HepG2 (cell line): ENCODE measurements at regions of chr4 and their contacts with region 1.

Region 1: GRCh38 chr4:23401572-23401971 is 488.3 kb downstream of the PPARGC1A start:
- DNase-seq: no peak
- ATAC-seq: no peak
- H3K4me3 ChIP-seq: no peak overlapping the region
- H3K27ac ChIP-seq: no peak overlapping the region
- H3K4me1 ChIP-seq: no peaks in the 10 kb centered on the region
- H3K27me3 ChIP-seq: no peaks in the 10 kb centered on the region
- CTCF ChIP-seq: no peak
- EP300 ChIP-seq: no peak
- POLR2A ChIP-seq: no peak
- RAD21 ChIP-seq: no peak

Region 2: GRCh38 chr4:22670956-22671355 is 730.6 kb before region 1 on chr4:
- CTCF ChIA-PET with region 1: no interaction called
- POLR2A ChIA-PET with region 1: no interaction called
- in situ Hi-C with region 1: no loop called
- intact Hi-C with region 1: loop called (anchors 5 kb)
- DNase-seq: no peak
- ATAC-seq: no peak
- H3K4me3 ChIP-seq: no peak overlapping the region
- H3K27ac ChIP-seq: no peak overlapping the region
- H3K4me1 ChIP-seq: no peaks in the 10 kb centered on the region
- H3K27me3 ChIP-seq: no peaks in the 10 kb centered on the region
- CTCF ChIP-seq: no peak
- EP300 ChIP-seq: no peak
- POLR2A ChIP-seq: no peak
- RAD21 ChIP-seq: no peak

Region 3: GRCh38 chr4:24131954-24132673 is 730.5 kb after region 1 on chr4:
- CTCF ChIA-PET with region 1: no interaction called
- POLR2A ChIA-PET with region 1: no interaction called
- in situ Hi-C with region 1: no loop called
- intact Hi-C with region 1: no loop called
- DNase-seq: no peak
- ATAC-seq: no peak
- H3K4me3 ChIP-seq: no peak overlapping the region
- H3K27ac ChIP-seq: no peak overlapping the region
- H3K4me1 ChIP-seq: peaks cover 2% of the 10 kb centered on the region
- H3K27me3 ChIP-seq: no peaks in the 10 kb centered on the region; a peak in 1 of 5 replicates
- CTCF ChIP-seq: no peak
- EP300 ChIP-seq: no peak
- POLR2A ChIP-seq: no peak
- RAD21 ChIP-seq: no peak